Activated naive CD4-positive, alpha-beta T cell treated with anti-CD3 and anti-CD28 coated beads for 36 hours (primary cell): ENCODE measurements at regions of chr15 and their contacts with region 1.

Region 1: GRCh38 chr15:83164111-83164770 is 43.4 kb downstream of the HDGFL3 start:
- DNase-seq: no peak
- H3K4me3 Mint-ChIP-seq: no peak overlapping the region
- H3K27ac Mint-ChIP-seq: no peak overlapping the region
- H3K4me1 Mint-ChIP-seq: peaks cover 14% of the 10 kb centered on the region
- H3K27me3 Mint-ChIP-seq: peaks cover 29% of the 10 kb centered on the region

Region 2: GRCh38 chr15:83199288-83199687 is 35.0 kb after region 1 on chr15:
- CTCF ChIA-PET with region 1: no interaction called
- intact Hi-C with region 1: loop called (anchors 1 kb)
- DNase-seq: peak; percentile 34
- H3K4me3 Mint-ChIP-seq: no peak overlapping the region
- H3K27ac Mint-ChIP-seq: no peak overlapping the region
- H3K4me1 Mint-ChIP-seq: peaks cover 19% of the 10 kb centered on the region
- H3K27me3 Mint-ChIP-seq: peaks cover 28% of the 10 kb centered on the region